Heart left ventricle (tissue), 16 donors: ENCODE measurements at regions of chr2 and their contacts with region 1.

Region 1: GRCh38 chr2:19362755-19363473 is 4.5 kb upstream of the OSR1 start:
- DNase-seq: peak; percentile 79 to 85 (median 84)
- ATAC-seq: peak; percentile 21 to 63 (median 57)
- H3K4me3 ChIP-seq: peak overlapping the region; percentile 47 to 76 (median 64)
- H3K27ac ChIP-seq: peak overlapping the region in 9 of 12 donors; percentile 14 to 84 (median 38)
- H3K4me1 ChIP-seq: peaks cover 0 to 37% (median 14%) of the 10 kb centered on the region in 12 donors
- H3K27me3 ChIP-seq: peaks cover 0 to 52% (median 9%) of the 10 kb centered on the region in 9 donors
- CTCF ChIP-seq: peak; percentile 72 to 90 (median 86)
- POLR2A ChIP-seq: no peak

Region 2: GRCh38 chr2:18435421-18436037 is 927.4 kb before region 1 on chr2:
- intact Hi-C with region 1: loop called in 6 of 10 experiments (anchors 5 to 10 kb)
- DNase-seq: no peak
- ATAC-seq: peak in 2 of 4 donors; percentile 37 to 38
- H3K4me3 ChIP-seq: no peak overlapping the region
- H3K27ac ChIP-seq: no peak overlapping the region
- H3K4me1 ChIP-seq: peaks cover 0 to 16% (median 0%) of the 10 kb centered on the region in 12 donors
- H3K27me3 ChIP-seq: no peaks in the 10 kb centered on the region
- CTCF ChIP-seq: peak in 11 of 12 donors; percentile 38 to 71 (median 57)
- POLR2A ChIP-seq: no peak

Region 3: GRCh38 chr2:18749912-18750526 is 612.9 kb before region 1 on chr2:
- intact Hi-C with region 1: loop called (anchors 2 to 5 kb)
- DNase-seq: peak in 4 of 5 donors; percentile 36 to 61 (median 46)
- ATAC-seq: peak in 1 of 4 donors; percentile 47
- H3K4me3 ChIP-seq: no peak overlapping the region
- H3K27ac ChIP-seq: no peak overlapping the region
- H3K4me1 ChIP-seq: peaks cover 0 to 6% (median 0%) of the 10 kb centered on the region in 12 donors
- H3K27me3 ChIP-seq: no peaks in the 10 kb centered on the region
- CTCF ChIP-seq: peak; percentile 63 to 89 (median 76)
- POLR2A ChIP-seq: no peak

Region 4: GRCh38 chr2:18987592-18988073 is 375.3 kb before region 1 on chr2:
- intact Hi-C with region 1: loop called in 9 of 10 experiments (anchors 5 to 10 kb)
- DNase-seq: peak; percentile 71 to 82 (median 80)
- ATAC-seq: peak in 2 of 4 donors; percentile 57 to 72
- H3K4me3 ChIP-seq: no peak overlapping the region
- H3K27ac ChIP-seq: peak overlapping the region in 1 of 12 donors; percentile 14
- H3K4me1 ChIP-seq: peaks cover 0 to 25% (median 4%) of the 10 kb centered on the region in 12 donors
- H3K27me3 ChIP-seq: no peaks in the 10 kb centered on the region
- CTCF ChIP-seq: peak in 8 of 12 donors; percentile 5 to 56 (median 46)
- POLR2A ChIP-seq: no peak

Region 5: GRCh38 chr2:19461504-19462255 is 98.8 kb after region 1 on chr2:
- intact Hi-C with region 1: no loop called
- DNase-seq: no peak
- ATAC-seq: no peak
- H3K4me3 ChIP-seq: no peak overlapping the region
- H3K27ac ChIP-seq: no peak overlapping the region
- H3K4me1 ChIP-seq: peaks cover 0 to 4% (median 0%) of the 10 kb centered on the region in 12 donors
- H3K27me3 ChIP-seq: no peaks in the 10 kb centered on the region
- CTCF ChIP-seq: no peak
- POLR2A ChIP-seq: no peak

Region 6: GRCh38 chr2:19673213-19673791 is 310.4 kb after region 1 on chr2:
- intact Hi-C with region 1: loop called in 3 of 10 experiments (anchors 10 kb)
- DNase-seq: peak in 1 of 5 donors; percentile 54
- ATAC-seq: peak; percentile 23 to 49 (median 31)
- H3K4me3 ChIP-seq: no peak overlapping the region
- H3K27ac ChIP-seq: peak overlapping the region in 1 of 12 donors; percentile 54
- H3K4me1 ChIP-seq: peaks cover 0 to 11% (median 0%) of the 10 kb centered on the region in 12 donors
- H3K27me3 ChIP-seq: no peaks in the 10 kb centered on the region
- CTCF ChIP-seq: no peak
- POLR2A ChIP-seq: no peak

Region 7: GRCh38 chr2:19746611-19747309 is 383.8 kb after region 1 on chr2:
- intact Hi-C with region 1: loop called in 3 of 10 experiments (anchors 5 to 10 kb)
- DNase-seq: peak in 1 of 5 donors; percentile 52
- ATAC-seq: peak in 3 of 4 donors; percentile 52 to 83 (median 54)
- H3K4me3 ChIP-seq: no peak overlapping the region
- H3K27ac ChIP-seq: peak overlapping the region in 2 of 12 donors; percentile 67 to 71
- H3K4me1 ChIP-seq: peaks cover 0 to 25% (median 3%) of the 10 kb centered on the region in 12 donors
- H3K27me3 ChIP-seq: no peaks in the 10 kb centered on the region
- CTCF ChIP-seq: peak in 11 of 12 donors; percentile 8 to 52 (median 26)
- POLR2A ChIP-seq: no peak